Right ventricle myocardium superior (tissue), 1 donor: ENCODE measurements at regions of chr6 and their contacts with region 1.

Region 1: DNA sequence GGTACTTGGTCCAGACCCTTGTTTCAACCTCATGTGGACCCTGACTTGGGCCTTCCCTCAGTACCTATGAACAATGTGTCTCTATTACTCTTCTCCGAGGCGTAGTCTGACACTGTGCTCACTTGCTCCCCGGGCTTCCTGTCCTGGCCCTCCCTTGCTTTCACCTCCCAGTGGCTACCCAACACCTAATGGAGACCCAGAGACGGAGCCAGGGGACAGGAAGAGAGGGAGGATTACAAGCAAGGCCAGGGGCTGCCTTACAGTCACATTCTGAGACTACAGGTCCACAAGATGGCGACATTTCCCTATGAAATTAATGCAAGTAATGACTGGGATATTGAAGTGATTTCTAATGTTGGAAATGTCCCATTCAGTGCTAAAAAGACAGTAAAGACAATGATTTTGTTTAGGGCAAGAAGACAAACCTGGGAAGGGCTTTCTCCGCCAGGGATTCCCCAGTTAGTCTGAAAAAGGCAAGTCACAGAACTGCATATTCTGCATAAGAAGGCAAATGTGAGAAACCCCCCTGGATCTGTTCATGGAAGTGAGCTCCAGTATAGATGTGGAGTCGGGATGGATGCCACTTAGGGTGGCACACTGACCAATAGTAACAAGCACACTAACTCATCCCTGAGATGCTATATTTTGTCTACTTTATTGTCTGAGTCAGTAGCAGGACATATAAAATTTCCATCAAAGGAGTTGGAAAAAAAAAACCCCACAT is 44.0 kb upstream of the ZBTB24 start:
- DNase-seq: no peak
- ATAC-seq: peak; percentile 71

Region 2: DNA sequence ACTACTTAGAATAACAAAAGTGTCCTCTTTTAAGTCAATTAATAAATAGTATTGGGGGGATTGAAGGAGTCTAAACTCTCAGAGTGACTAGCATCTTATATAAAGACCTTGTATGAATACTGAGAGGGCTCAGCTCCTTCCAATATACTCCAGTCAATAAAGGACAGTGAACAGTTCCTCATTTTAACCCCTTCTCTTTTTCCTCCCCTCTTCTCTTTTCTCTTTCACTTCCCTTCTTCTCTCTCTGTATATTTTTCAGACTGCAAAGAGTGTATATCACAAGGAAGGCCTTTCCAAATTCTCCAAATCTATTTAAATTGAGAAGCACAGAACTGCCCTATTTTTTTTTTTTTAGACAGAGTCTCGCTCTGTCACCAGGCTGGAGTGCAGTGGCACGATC is 244.3 kb before region 1 on chr6:
- intact Hi-C with region 1: no loop called
- DNase-seq: no peak
- ATAC-seq: no peak

Region 3: DNA sequence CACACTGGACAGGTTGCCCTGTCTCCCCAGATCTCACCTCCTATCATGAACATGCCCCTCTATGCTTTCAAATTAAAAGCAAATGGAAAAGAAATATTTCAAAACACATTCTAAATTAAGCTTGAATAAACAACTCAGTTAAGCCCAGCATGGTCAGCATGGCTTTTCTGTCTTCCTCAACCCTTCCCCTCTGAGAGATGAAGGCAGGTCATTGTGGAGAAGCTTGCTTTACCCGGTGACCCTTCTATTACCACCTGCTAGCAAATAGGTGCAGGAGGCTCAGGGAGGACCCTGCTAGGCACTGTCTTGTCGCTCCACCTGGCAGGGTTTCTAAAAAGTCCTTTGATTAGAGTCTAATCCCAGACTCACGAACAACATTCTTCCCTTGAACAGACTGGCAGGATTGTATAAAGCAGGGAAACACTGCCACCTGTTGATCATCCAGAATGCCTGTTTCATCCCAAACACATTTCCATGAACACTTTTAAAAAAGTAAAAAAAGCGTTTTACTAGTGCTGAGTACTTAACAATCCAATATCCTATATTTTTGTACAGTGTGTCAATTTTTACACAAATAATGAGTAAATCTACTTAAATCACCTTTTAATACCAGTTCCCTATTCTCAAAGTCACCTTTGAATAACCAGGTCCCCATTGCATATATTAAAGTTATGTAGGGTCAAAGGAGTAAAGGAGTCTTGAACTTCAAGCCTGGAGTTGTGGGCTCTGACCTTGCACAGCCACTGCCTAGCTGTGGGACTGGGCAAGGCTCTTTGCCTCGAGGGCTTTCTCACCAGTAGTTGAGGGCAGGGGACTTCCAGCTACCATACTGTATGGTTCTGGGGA is 526.6 kb after region 1 on chr6:
- intact Hi-C with region 1: loop called (anchors 10 kb)
- DNase-seq: no peak
- ATAC-seq: peak; percentile 66